Common myeloid progenitor, CD34-positive (primary cell): ENCODE measurements at regions of chr14 and their contacts with region 1.

Region 1: GRCh38 chr14:94036313-94037050 is 10.3 kb downstream of the OTUB2 start:
- DNase-seq: peak; percentile 80 to 86 (median 80)
- H3K4me3 ChIP-seq: no peak overlapping the region
- H3K27ac ChIP-seq: no peak overlapping the region
- H3K4me1 ChIP-seq: no peaks in the 10 kb centered on the region
- H3K27me3 ChIP-seq: no peaks in the 10 kb centered on the region

Region 2: GRCh38 chr14:93880021-93880820 is 156.3 kb before region 1 on chr14:
- CTCF ChIA-PET with region 1: no interaction called
- POLR2A ChIA-PET with region 1: no interaction called
- DNase-seq: no peak
- H3K4me3 ChIP-seq: no peak overlapping the region
- H3K27ac ChIP-seq: no peak overlapping the region
- H3K4me1 ChIP-seq: no peaks in the 10 kb centered on the region
- H3K27me3 ChIP-seq: peaks cover 0 to 29% (median 3%) of the 10 kb centered on the region in 5 experiments

Region 3: GRCh38 chr14:93906341-93907329 is 129.8 kb before region 1 on chr14:
- CTCF ChIA-PET with region 1: no interaction called
- POLR2A ChIA-PET with region 1: no interaction called
- DNase-seq: peak; percentile 17 to 46 (median 30)
- H3K4me3 ChIP-seq: no peak overlapping the region
- H3K27ac ChIP-seq: no peak overlapping the region
- H3K4me1 ChIP-seq: no peaks in the 10 kb centered on the region
- H3K27me3 ChIP-seq: peaks cover 0 to 10% (median 7%) of the 10 kb centered on the region in 5 experiments

Region 4: DNA sequence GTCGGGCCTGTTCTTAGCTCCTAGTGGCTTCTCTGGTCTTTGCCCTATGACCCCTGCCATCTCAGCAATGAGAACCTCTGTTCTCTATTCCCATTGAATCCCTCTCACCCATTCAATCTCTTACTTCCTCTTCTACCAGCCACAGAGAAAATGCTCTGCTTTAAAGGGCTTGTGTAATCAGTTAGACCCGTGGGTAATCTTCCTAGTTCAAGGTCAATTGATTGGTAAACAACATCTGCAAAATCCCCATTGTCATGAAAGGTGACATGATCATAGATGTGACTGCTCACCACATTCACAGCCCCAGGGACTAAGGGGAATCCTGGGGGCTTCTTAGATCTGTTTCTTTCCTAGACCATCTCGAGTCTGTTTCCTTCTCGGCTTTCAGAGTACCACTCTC is 46.5 kb before region 1 on chr14:
- CTCF ChIA-PET with region 1: no interaction called
- POLR2A ChIA-PET with region 1: no interaction called
- DNase-seq: no peak
- H3K4me3 ChIP-seq: no peak overlapping the region
- H3K27ac ChIP-seq: no peak overlapping the region
- H3K4me1 ChIP-seq: peaks cover 0 to 3% (median 0%) of the 10 kb centered on the region in 4 experiments
- H3K27me3 ChIP-seq: peaks cover 0 to 19% (median 0%) of the 10 kb centered on the region in 5 experiments

Region 5: GRCh38 chr14:94019323-94019722 is 17.2 kb before region 1 on chr14:
- CTCF ChIA-PET with region 1: interaction called, 10 read pairs
- POLR2A ChIA-PET with region 1: no interaction called
- DNase-seq: no peak
- H3K4me3 ChIP-seq: no peak overlapping the region
- H3K27ac ChIP-seq: no peak overlapping the region
- H3K4me1 ChIP-seq: no peaks in the 10 kb centered on the region
- H3K27me3 ChIP-seq: peaks cover 0 to 7% (median 0%) of the 10 kb centered on the region in 5 experiments

Region 6: DNA sequence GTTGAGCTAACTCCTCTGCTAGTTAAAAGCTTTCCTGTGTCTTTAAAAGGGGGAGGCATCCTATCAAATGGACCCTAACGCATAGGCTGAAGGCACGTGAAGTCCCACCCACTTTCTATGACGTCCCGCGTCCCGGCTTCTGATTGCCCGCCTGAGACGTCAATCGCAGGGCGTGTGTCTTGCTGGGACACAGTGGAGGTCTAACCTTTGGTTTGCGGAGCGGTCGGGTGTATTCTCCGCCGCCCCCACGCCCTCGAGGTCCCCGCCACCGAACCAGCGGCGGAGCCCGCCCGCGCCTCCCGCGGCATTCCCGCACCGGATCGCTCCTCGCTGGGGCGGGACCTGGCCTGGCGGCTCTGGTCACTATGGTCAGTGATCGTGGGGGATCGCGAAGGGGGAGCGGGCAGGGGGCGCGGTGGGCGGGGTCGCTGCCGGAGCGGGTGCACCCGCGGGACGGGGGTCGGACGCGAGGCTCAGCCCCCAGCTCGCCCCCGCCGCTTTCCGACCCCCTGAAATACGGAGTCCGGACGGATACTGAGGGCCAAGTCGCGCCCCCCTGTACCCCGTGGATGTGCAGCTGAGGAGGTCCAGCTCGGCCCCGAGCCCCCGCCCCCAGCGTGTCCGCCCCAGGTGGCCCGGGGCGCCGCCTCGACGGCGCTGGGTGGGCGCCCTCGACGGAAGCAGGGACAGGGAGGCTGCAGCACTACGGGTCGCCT is 10.2 kb before region 1 on chr14 and contains the start of gene OTUB2:
- CTCF ChIA-PET with region 1: interaction called, 11 read pairs
- POLR2A ChIA-PET with region 1: interaction called, 3 read pairs
- DNase-seq: peak; percentile 98 to 99 (median 99)
- H3K4me3 ChIP-seq: peak within 1 kb of the TSS; percentile 8 to 69 (median 42)
- H3K27ac ChIP-seq: no peak within 1 kb of the TSS
- H3K4me1 ChIP-seq: peaks cover 0 to 19% (median 14%) of the 10 kb centered on the region in 4 experiments
- H3K27me3 ChIP-seq: no peaks in the 10 kb centered on the region

Region 7: GRCh38 chr14:94051115-94051514 is 14.6 kb after region 1 on chr14:
- CTCF ChIA-PET with region 1: interaction called, 19 read pairs
- POLR2A ChIA-PET with region 1: no interaction called
- DNase-seq: peak in 1 of 3 donors; percentile 5
- H3K4me3 ChIP-seq: no peak overlapping the region
- H3K27ac ChIP-seq: no peak overlapping the region
- H3K4me1 ChIP-seq: no peaks in the 10 kb centered on the region
- H3K27me3 ChIP-seq: no peaks in the 10 kb centered on the region

Region 8: DNA sequence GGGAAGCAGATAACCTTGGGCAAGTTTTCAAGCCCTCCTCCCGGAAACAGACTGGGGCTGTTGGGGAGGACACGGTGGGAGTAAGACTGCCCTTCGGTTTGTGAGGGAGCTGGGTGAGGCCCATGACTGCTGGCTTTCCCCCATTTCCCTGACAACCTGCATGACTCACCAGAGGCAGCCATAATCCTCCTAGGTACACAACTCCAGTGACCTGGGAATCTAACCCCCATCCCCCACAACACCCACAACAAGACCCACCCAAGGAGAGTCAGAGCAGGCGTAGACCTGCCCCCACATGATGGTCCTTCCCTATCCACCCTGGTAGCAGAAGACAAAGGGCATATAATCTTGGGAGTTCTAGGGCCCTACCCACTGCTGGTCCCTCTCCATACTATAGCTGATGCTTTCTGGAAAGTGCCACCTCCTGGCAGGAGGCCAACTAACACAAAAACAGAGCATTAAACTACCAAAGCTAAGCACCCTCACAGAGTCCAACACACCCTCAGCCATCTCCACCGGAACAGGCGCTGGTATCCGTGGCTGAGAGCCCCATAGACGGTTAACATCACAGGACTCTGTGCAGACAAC is 29.7 kb after region 1 on chr14:
- CTCF ChIA-PET with region 1: no interaction called
- POLR2A ChIA-PET with region 1: no interaction called
- DNase-seq: no peak
- H3K4me3 ChIP-seq: no peak overlapping the region
- H3K27ac ChIP-seq: no peak overlapping the region
- H3K4me1 ChIP-seq: no peaks in the 10 kb centered on the region
- H3K27me3 ChIP-seq: no peaks in the 10 kb centered on the region

Region 9: GRCh38 chr14:94143239-94143638 is 106.8 kb after region 1 on chr14:
- CTCF ChIA-PET with region 1: interaction called, 50 read pairs
- POLR2A ChIA-PET with region 1: no interaction called
- DNase-seq: peak in 1 of 3 donors; percentile 17
- H3K4me3 ChIP-seq: no peak overlapping the region
- H3K27ac ChIP-seq: no peak overlapping the region
- H3K4me1 ChIP-seq: peaks cover 0 to 10% (median 3%) of the 10 kb centered on the region in 4 experiments
- H3K27me3 ChIP-seq: no peaks in the 10 kb centered on the region